ENCODE measurements at regions of chr17 and their contacts with region 1.

Region 1: DNA sequence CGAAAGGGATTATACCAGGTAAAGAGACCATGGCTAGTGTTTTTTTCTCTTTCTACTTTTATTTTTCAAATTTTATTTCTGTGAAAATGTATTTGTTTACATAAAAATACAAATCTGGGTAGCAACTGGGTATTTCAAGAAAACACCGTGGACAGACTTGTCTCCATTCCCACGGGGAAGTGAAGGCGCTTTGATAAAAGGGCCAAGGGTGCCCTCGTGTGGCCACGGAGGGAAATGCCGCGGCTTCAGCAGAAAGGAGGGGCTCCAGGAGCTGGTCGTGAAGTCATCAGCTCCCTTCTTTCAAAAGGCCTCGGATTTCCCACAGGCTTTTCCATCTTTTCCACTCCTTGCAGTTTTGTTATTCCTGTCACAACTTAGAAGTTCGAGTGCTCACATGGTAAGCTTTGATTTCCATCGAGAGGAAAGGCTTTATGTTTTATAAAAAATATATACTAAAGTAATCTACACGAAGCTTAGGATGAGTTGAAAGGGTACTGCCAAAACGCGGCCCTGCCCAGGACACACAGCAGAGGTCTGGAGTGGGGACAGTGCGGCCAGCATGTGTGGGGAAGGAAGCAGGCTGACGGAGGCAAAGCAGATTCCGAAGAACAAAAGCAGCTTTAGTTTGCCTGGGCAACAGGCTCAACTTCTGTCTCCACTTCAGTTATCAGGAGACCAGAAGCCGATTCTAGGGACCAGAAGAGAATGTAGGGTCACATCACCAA is 15.3 kb upstream of the MNT start:
- DNase-seq: peak; percentile 81
- H3K4me3 ChIP-seq: no peak overlapping the region
- H3K27ac ChIP-seq: no peak overlapping the region
- H3K4me1 ChIP-seq: no peaks in the 10 kb centered on the region
- CTCF ChIP-seq: peak; percentile 98

Region 2: GRCh38 chr17:2319051-2319450 is 97.1 kb before region 1 on chr17:
- CTCF ChIA-PET with region 1: no interaction called
- POLR2A ChIA-PET with region 1: no interaction called
- intact Hi-C with region 1: no loop called
- DNase-seq: no peak
- H3K4me3 ChIP-seq: no peak overlapping the region
- H3K27ac ChIP-seq: no peak overlapping the region
- H3K4me1 ChIP-seq: no peaks in the 10 kb centered on the region
- CTCF ChIP-seq: no peak

Region 3: DNA sequence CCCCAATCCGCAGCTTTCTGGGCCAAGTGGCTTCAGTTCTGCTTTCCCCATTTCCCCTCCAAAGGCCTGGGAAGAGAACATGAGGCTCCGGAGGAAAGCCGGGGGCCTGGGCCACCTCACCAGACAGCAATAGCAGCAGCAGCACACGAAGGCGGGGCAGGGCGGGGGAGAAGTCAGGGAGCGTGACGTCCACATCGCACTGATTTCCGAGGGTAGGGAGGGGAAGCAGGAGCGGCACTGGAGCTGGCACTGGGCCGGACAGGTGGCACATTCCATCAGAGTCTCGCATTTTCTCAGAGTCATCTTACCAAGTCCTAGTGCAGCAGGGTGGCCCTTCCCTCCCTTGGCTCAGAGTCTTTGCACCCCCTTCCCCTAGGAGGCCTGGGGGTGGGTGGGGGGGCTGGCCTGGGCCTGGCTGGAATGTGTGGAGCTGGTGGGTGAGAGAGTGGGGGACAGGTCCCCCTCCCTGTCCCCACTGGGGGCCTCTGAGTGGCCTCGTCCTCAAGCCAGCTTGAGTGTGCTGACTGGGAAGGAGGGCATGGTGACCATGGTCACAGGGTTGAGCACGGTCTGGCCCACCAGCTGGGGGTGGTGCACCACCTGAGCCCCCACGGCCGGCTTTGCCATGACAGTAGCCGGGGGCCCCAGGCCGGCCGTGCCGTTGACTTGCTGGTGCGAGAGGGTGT is 29.6 kb before region 1 on chr17:
- CTCF ChIA-PET with region 1: interaction called, 23 read pairs
- POLR2A ChIA-PET with region 1: interaction called, 9 read pairs
- intact Hi-C with region 1: loop called (anchors 1 kb)
- DNase-seq: no peak
- H3K4me3 ChIP-seq: no peak overlapping the region
- H3K27ac ChIP-seq: no peak overlapping the region
- H3K4me1 ChIP-seq: peaks cover 16% of the 10 kb centered on the region
- CTCF ChIP-seq: no peak

Region 4: DNA sequence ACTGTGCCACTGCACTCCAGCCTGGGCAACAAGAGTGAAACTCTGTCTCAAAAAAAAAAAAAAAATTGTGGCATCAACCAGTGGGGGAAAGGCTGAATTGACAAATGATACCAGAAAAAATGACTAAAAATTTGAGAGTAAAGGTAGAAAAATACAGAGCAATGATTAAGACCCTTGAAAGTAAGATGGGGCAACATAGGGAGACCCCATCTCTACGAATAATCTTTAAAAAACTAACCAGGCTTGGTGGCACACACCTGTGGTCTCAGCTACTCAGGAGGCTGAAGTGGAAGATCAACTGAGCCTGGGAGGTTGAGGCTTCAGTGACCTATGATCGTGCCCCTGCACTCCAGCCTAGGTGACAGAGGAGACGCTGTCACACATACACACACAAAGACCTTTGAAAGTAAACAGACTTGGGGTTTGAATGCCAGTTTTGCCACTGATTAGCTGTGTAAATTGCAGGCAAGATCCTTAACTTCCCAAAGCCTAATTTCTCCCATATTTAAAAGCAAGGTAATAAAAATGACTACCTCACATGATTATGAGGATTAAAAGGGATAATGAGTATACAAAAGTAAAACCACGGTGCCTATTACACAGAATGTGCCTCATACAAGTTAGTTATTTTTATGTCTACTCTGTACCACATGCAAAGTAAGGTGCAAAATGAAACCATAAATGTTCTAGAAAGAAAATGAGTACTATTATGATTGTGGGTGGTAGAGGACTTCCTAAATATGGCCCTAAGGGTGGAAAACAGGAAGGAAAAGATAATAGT is 155.5 kb after region 1 on chr17:
- CTCF ChIA-PET with region 1: no interaction called
- POLR2A ChIA-PET with region 1: no interaction called
- intact Hi-C with region 1: no loop called
- DNase-seq: peak; percentile 25
- H3K4me3 ChIP-seq: peak overlapping the region; percentile 31
- H3K27ac ChIP-seq: peak overlapping the region; percentile 11
- H3K4me1 ChIP-seq: peaks cover 10% of the 10 kb centered on the region
- CTCF ChIP-seq: no peak